ENCODE measurements at regions of chr9 and their contacts with region 1.

Region 1: GRCh38 chr9:80605129-80605528 is 1033.4 kb downstream of the TLE4 start:
- DNase-seq: no peak
- H3K4me3 ChIP-seq: no peak overlapping the region
- H3K27ac ChIP-seq: no peak overlapping the region
- H3K4me1 ChIP-seq: peaks cover 0 to 7% (median 0%) of the 10 kb centered on the region in 4 donors
- H3K27me3 ChIP-seq: no peaks in the 10 kb centered on the region
- CTCF ChIP-seq: peak in 4 of 5 experiments; percentile 26 to 43 (median 37)
- EP300 ChIP-seq: no peak
- POLR2A ChIP-seq: no peak

Region 2: DNA sequence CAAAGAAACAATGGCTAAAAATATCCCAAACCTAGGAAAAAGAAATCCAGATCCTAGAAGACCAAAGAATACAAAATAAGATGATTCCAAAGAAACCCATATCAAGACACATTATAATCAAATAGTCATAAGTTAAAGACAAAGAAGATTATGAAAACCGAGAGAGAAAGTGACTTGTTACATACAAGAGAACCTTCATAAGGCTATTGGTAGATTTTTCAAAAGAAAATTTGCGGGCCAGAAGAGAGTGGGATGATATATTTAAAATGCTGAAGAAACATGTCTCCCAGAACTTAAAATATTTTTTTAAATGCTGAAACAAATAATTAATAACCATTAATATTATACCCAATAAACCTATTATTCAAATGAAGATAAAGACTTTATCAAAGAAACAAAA is 346.1 kb before region 1 on chr9:
- in situ Hi-C with region 1: no loop called
- intact Hi-C with region 1: no loop called
- DNase-seq: no peak
- H3K4me3 ChIP-seq: no peak overlapping the region
- H3K27ac ChIP-seq: no peak overlapping the region
- H3K4me1 ChIP-seq: no peaks in the 10 kb centered on the region
- H3K27me3 ChIP-seq: no peaks in the 10 kb centered on the region
- CTCF ChIP-seq: no peak
- EP300 ChIP-seq: no peak
- POLR2A ChIP-seq: no peak

Region 3: DNA sequence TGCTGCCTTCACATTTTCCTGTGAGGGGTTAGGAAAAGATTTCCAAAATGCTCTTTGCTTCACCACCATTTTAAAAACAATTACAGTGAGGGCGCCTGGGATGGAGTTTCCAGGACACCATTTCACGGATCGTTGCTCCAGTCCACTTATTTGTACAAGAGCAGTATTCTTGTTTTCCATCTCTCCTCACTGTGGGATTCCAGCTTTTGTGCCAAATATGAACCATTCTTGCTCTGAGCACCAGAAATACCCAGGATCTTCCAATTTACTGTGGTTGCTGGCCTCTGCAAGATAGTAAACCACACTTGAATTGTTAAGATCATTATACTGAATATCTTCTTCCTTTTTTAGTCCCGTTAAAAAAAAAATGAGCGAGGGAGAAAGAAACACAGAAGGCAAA is 184.7 kb after region 1 on chr9:
- in situ Hi-C with region 1: no loop called
- intact Hi-C with region 1: loop called (anchors 5 kb)
- DNase-seq: no peak
- H3K4me3 ChIP-seq: no peak overlapping the region
- H3K27ac ChIP-seq: no peak overlapping the region
- H3K4me1 ChIP-seq: no peaks in the 10 kb centered on the region
- H3K27me3 ChIP-seq: no peaks in the 10 kb centered on the region
- CTCF ChIP-seq: no peak
- EP300 ChIP-seq: no peak
- POLR2A ChIP-seq: no peak

Region 4: GRCh38 chr9:80885894-80886293 is 280.8 kb after region 1 on chr9:
- in situ Hi-C with region 1: no loop called
- intact Hi-C with region 1: loop called (anchors 10 kb)
- DNase-seq: no peak
- H3K4me3 ChIP-seq: no peak overlapping the region
- H3K27ac ChIP-seq: no peak overlapping the region
- H3K4me1 ChIP-seq: no peaks in the 10 kb centered on the region
- H3K27me3 ChIP-seq: no peaks in the 10 kb centered on the region
- CTCF ChIP-seq: no peak
- EP300 ChIP-seq: no peak
- POLR2A ChIP-seq: no peak